ENCODE measurements at regions of chr15 and their contacts with region 1.

Region 1: DNA sequence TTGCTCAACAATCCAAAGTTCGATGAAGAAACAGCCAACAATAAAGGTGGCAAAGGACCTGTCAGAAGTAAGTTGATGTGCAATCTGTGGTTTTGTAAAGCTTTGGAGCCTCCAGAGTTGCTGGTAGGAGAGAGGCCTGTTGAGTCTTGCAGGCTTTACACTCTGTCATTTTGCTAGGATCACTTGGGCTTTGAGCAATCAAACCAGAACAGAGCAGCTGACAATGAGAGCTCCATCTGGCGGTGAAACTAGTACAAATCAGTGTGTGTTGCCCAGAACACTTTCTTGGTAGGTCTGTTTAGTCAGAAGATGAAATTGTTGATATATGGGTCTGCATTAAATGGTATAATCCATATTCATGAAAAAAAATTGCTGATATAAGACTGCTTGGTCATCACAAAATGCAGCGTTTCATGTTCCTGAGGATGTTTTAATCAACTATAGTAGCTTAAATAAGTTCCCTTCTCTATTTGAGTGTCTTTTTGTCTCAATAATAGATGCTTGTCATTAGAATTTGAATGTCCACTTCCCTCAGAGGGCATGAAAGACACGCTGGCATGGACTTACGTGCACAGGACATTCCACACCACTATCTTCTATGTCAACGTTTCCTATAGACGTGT is 25.7 kb downstream of the TMOD2 start:
- DNase-seq: peak; percentile 43
- ATAC-seq: peak; percentile 98
- H3K4me3 ChIP-seq: no peak overlapping the region
- H3K27ac ChIP-seq: no peak overlapping the region
- H3K4me1 ChIP-seq: no peaks in the 10 kb centered on the region
- H3K27me3 ChIP-seq: no peaks in the 10 kb centered on the region
- CTCF ChIP-seq: peak; percentile 74 to 77 (median 75)
- EP300 ChIP-seq: no peak
- POLR2A ChIP-seq: no peak
- RAD21 ChIP-seq: peak; percentile 74

Region 2: GRCh38 chr15:51622604-51623370 is 154.3 kb before region 1 on chr15 and contains the start of gene DMXL2:
- CTCF ChIA-PET with region 1: interaction called, 15 read pairs
- POLR2A ChIA-PET with region 1: no interaction called
- RAD21 ChIA-PET with region 1: interaction called, 11 read pairs
- SMC1A ChIA-PET with region 1: interaction called, 14 read pairs
- in situ Hi-C with region 1: no loop called
- intact Hi-C with region 1: no loop called
- DNase-seq: no peak
- ATAC-seq: peak; percentile 62
- H3K4me3 ChIP-seq: peak within 1 kb of the TSS; percentile 75
- H3K27ac ChIP-seq: peak within 1 kb of the TSS; percentile 64
- H3K4me1 ChIP-seq: peaks cover 30% of the 10 kb centered on the region
- H3K27me3 ChIP-seq: no peaks in the 10 kb centered on the region
- CTCF ChIP-seq: no peak
- EP300 ChIP-seq: no peak
- POLR2A ChIP-seq: peak; percentile 64; the same call in 1 of the 2 replicates
- RAD21 ChIP-seq: no peak
- polyA plus RNA-seq, gene DMXL2: 8.5 to 12.8 TPM

Region 3: DNA sequence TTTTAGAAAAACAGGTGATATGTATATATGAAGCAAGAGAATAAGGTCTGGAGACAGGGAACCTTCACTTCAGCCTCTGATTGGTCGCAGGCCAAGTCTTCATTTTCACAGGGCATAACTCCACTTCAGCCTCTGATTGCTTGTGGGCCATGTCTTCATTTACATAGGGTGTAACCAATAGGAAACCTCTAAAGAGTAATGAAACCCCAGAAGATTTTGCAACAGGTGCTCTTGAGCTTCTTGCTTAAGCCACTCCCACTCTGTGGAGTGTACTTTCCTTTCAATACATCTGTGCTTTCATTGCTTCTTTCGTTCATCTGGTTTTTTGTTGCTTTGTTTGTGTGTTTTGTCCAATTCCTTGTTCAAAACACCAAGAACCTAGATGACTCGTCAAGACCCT is 118.4 kb before region 1 on chr15:
- CTCF ChIA-PET with region 1: interaction called, 23 read pairs
- POLR2A ChIA-PET with region 1: no interaction called
- RAD21 ChIA-PET with region 1: interaction called, 6 read pairs
- SMC1A ChIA-PET with region 1: interaction called, 26 read pairs
- in situ Hi-C with region 1: no loop called
- intact Hi-C with region 1: no loop called
- DNase-seq: no peak
- ATAC-seq: peak; percentile 33; the same call in 2 of the 3 replicates
- H3K4me3 ChIP-seq: no peak overlapping the region
- H3K27ac ChIP-seq: no peak overlapping the region
- H3K4me1 ChIP-seq: no peaks in the 10 kb centered on the region
- H3K27me3 ChIP-seq: no peaks in the 10 kb centered on the region
- CTCF ChIP-seq: no peak
- EP300 ChIP-seq: no peak
- POLR2A ChIP-seq: no peak
- RAD21 ChIP-seq: no peak

Region 4: GRCh38 chr15:51702710-51703109 is 74.4 kb before region 1 on chr15:
- CTCF ChIA-PET with region 1: interaction called, 15 read pairs
- POLR2A ChIA-PET with region 1: no interaction called
- RAD21 ChIA-PET with region 1: interaction called, 3 read pairs
- SMC1A ChIA-PET with region 1: interaction called, 5 read pairs
- in situ Hi-C with region 1: no loop called
- intact Hi-C with region 1: no loop called
- DNase-seq: no peak
- ATAC-seq: no peak
- H3K4me3 ChIP-seq: no peak overlapping the region
- H3K27ac ChIP-seq: no peak overlapping the region
- H3K4me1 ChIP-seq: no peaks in the 10 kb centered on the region
- H3K27me3 ChIP-seq: no peaks in the 10 kb centered on the region
- CTCF ChIP-seq: no peak
- EP300 ChIP-seq: no peak
- POLR2A ChIP-seq: no peak
- RAD21 ChIP-seq: no peak

Region 5: GRCh38 chr15:51737280-51738017 is 39.6 kb before region 1 on chr15 and contains the start of gene LYSMD2:
- CTCF ChIA-PET with region 1: interaction called, 136 read pairs
- POLR2A ChIA-PET with region 1: interaction called, 5 read pairs
- RAD21 ChIA-PET with region 1: interaction called, 33 read pairs
- SMC1A ChIA-PET with region 1: interaction called, 45 read pairs
- in situ Hi-C with region 1: no loop called
- intact Hi-C with region 1: loop called (anchors 2 kb)
- DNase-seq: no peak
- ATAC-seq: peak; percentile 46
- H3K4me3 ChIP-seq: peak within 1 kb of the TSS; percentile 77
- H3K27ac ChIP-seq: peak within 1 kb of the TSS; percentile 94
- H3K4me1 ChIP-seq: peaks cover 25% of the 10 kb centered on the region
- H3K27me3 ChIP-seq: no peaks in the 10 kb centered on the region
- CTCF ChIP-seq: no peak
- EP300 ChIP-seq: no peak; a peak in 1 of 4 replicates
- POLR2A ChIP-seq: peak; percentile 63
- RAD21 ChIP-seq: no peak
- polyA plus RNA-seq, gene LYSMD2: 30.5 to 61.3 TPM

Region 6: DNA sequence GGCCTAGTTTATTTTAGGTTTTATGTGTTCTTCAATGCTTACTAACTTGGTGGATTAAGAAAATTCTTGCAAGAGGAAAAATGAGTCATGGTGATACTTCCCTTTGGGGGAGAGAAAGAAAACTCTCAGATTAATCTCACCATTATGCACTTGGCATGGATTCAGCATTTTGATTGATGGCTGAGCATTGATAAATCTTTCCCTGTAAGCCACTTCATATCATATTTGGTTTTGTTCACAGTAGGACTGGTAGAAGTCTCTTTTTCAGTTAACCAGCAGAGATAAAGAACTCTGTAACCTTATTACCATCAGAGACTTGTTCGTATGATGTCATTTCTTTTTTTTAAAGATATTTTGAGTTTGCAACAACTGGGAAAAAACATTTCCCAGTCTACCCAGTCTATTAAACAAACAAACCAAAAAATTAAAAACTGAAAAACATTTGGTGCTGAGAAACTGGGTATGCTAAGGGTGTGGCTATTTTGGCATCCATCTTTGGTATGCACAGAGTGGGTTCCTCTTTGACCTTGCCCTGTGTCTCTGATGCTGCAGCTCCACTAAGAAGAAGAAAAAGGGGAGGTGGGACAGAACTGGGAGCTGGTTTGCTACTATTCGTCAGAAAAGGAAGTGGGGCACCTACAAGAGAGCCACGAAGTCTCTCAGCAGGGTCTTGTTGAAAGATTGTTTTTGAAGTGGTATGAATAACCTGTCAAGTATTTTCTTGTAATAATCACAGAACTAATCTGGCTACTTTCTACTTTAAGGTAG is 69.6 kb after region 1 on chr15:
- CTCF ChIA-PET with region 1: no interaction called
- POLR2A ChIA-PET with region 1: no interaction called
- RAD21 ChIA-PET with region 1: no interaction called
- SMC1A ChIA-PET with region 1: no interaction called
- in situ Hi-C with region 1: no loop called
- intact Hi-C with region 1: no loop called
- DNase-seq: no peak
- ATAC-seq: peak; percentile 24; the same call in 1 of the 3 replicates
- H3K4me3 ChIP-seq: no peak overlapping the region
- H3K27ac ChIP-seq: no peak overlapping the region
- H3K4me1 ChIP-seq: peaks cover 20% of the 10 kb centered on the region
- H3K27me3 ChIP-seq: no peaks in the 10 kb centered on the region
- CTCF ChIP-seq: no peak
- EP300 ChIP-seq: no peak
- POLR2A ChIP-seq: no peak
- RAD21 ChIP-seq: no peak

Region 7: GRCh38 chr15:51907136-51907914 is 130.3 kb after region 1 on chr15:
- CTCF ChIA-PET with region 1: interaction called, 10 read pairs
- POLR2A ChIA-PET with region 1: no interaction called
- RAD21 ChIA-PET with region 1: no interaction called
- SMC1A ChIA-PET with region 1: no interaction called
- in situ Hi-C with region 1: no loop called
- intact Hi-C with region 1: no loop called
- DNase-seq: no peak
- ATAC-seq: no peak
- H3K4me3 ChIP-seq: no peak overlapping the region
- H3K27ac ChIP-seq: no peak overlapping the region
- H3K4me1 ChIP-seq: no peaks in the 10 kb centered on the region
- H3K27me3 ChIP-seq: no peaks in the 10 kb centered on the region
- CTCF ChIP-seq: 0 out of 6 replicates have a peak, but pooled peaks of 1 of the 3 experiments have one; percentile 4
- EP300 ChIP-seq: no peak
- POLR2A ChIP-seq: no peak
- RAD21 ChIP-seq: no peak

Measured in GM12878 (cell line).